ENCODE measurements at regions of chr13 and their contacts with region 1.

Region 1: DNA sequence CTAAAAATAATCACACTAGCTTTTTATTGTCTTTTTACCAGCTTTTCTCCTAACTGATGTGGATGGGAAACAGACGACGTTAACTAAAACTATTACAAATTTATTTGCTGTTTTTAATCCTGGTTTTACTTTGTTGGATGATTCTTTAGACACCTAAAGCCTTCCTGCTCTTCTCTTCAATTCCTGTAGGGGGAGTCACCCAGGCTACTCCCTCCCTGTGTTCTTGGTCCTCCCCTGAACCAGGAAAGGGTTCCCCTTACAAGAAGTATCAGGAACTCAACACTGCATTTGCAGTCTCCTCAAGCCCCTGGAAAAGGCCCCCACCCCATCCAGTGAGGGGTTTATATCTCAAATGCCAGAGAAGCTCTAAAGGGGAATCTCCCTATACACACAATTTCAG is 206.1 kb downstream of the SUCLA2 start:
- DNase-seq: no peak
- H3K4me3 ChIP-seq: no peak overlapping the region
- H3K27ac ChIP-seq: no peak overlapping the region
- H3K4me1 ChIP-seq: no peaks in the 10 kb centered on the region
- H3K27me3 ChIP-seq: no peaks in the 10 kb centered on the region
- CTCF ChIP-seq: peak in 3 of 6 experiments; percentile 5 to 37 (median 11)
- POLR2A ChIP-seq: no peak

Region 2: DNA sequence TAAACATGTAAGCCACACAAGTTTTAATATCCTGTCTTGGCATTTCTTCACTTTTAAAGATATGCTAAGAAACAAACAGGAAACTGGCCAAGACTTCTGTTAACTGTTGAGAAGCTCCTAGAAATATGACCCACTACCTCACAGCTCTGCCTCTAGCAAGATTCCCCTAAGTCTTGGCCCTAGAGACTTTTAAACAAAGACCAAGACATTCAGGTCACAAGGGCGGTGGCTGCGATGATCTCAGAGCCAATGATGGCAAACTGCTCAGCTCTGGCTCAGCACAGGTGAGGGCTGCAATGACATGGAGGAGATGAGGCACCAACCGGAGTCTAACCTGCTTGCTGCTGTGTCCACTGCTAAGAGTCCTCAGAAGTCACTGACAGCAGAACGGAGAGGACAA is 91.4 kb after region 1 on chr13:
- intact Hi-C with region 1: no loop called
- DNase-seq: no peak
- H3K4me3 ChIP-seq: no peak overlapping the region
- H3K27ac ChIP-seq: no peak overlapping the region
- H3K4me1 ChIP-seq: no peaks in the 10 kb centered on the region
- H3K27me3 ChIP-seq: no peaks in the 10 kb centered on the region
- CTCF ChIP-seq: no peak
- POLR2A ChIP-seq: no peak

Region 3: GRCh38 chr13:48050550-48050949 is 255.6 kb after region 1 on chr13:
- intact Hi-C with region 1: loop called (anchors 10 kb)
- DNase-seq: no peak
- H3K4me3 ChIP-seq: no peak overlapping the region
- H3K27ac ChIP-seq: no peak overlapping the region
- H3K4me1 ChIP-seq: no peaks in the 10 kb centered on the region
- H3K27me3 ChIP-seq: no peaks in the 10 kb centered on the region
- CTCF ChIP-seq: no peak
- POLR2A ChIP-seq: no peak